A549 (cell line): ENCODE measurements at regions of chr2 and their contacts with region 1.

Region 1: GRCh38 chr2:27281855-27282559 is at the start of gene TRIM54:
- DNase-seq: no peak
- ATAC-seq: peak; percentile 37; a peak in 3 of 6 replicates
- H3K4me3 ChIP-seq: no peak within 1 kb of the TSS
- H3K27ac ChIP-seq: peak within 1 kb of the TSS; percentile 38 to 75
- H3K4me1 ChIP-seq: peaks cover 26% of the 10 kb centered on the region
- CTCF ChIP-seq: no peak
- EP300 ChIP-seq: no peak
- POLR2A ChIP-seq: no peak
- RAD21 ChIP-seq: no peak
- polyA plus RNA-seq, gene TRIM54: 0.05 and 0.14 TPM in 2 replicates

Region 2: DNA sequence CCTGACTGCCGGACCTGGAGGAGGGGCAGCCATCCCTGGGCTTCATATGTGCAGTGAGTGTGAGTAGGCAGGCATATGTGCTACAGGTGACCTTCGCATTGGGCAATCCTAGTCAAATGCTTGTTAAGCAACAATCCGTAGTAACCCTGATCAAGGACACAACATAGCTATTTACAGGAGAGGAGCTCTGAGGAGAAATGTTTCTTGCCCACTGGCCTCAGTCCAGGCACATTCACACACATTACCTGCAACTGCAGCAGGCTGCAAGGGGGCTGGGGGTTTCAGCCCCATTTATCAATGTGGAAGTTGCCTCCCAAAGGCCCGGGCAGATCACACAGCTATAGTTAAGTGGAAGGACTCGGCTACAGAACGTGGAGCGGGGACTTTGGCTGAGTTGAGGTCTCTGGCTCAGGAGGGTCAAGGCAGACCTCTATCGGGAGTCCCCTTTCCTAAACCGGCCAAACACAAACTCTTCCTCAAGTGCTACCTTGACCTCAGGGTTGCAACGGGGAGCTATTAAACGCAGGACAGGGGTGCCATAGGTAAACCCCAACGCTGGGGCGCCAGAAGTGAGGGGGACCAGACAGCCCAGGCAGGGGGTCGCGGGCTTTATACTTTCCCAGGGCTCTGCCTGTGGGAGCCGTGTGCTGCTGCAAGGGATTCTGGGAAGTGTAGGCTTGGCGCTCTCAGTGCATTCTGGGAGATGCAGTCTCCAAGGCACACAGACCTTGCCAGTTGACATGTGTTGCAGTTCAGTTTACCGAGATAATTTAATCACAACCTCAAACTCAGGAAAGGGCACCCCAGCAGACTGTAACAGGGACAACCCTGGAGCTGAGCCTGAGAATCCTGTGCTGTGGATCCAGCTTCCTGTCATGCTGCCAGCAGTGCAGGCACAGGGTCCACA is 186.0 kb before region 1 on chr2:
- CTCF ChIA-PET with region 1: interaction called, 171 read pairs
- POLR2A ChIA-PET with region 1: no interaction called
- DNase-seq: peak; percentile 56 to 80
- ATAC-seq: peak; percentile 67 to 85
- H3K4me3 ChIP-seq: no peak overlapping the region
- H3K27ac ChIP-seq: peak overlapping the region; percentile 46 to 71; a peak in 5 of 6 replicates
- H3K4me1 ChIP-seq: peaks cover 20% of the 10 kb centered on the region
- CTCF ChIP-seq: no peak
- EP300 ChIP-seq: no peak
- POLR2A ChIP-seq: no peak
- RAD21 ChIP-seq: no peak

Region 3: GRCh38 chr2:27170581-27171333 is 111.2 kb before region 1 on chr2:
- CTCF ChIA-PET with region 1: interaction called, 23 read pairs
- POLR2A ChIA-PET with region 1: interaction called, 9 read pairs
- DNase-seq: no peak
- ATAC-seq: no peak
- H3K4me3 ChIP-seq: no peak overlapping the region
- H3K27ac ChIP-seq: no peak overlapping the region
- H3K4me1 ChIP-seq: no peaks in the 10 kb centered on the region
- CTCF ChIP-seq: no peak
- EP300 ChIP-seq: no peak
- POLR2A ChIP-seq: no peak
- RAD21 ChIP-seq: no peak

Region 4: DNA sequence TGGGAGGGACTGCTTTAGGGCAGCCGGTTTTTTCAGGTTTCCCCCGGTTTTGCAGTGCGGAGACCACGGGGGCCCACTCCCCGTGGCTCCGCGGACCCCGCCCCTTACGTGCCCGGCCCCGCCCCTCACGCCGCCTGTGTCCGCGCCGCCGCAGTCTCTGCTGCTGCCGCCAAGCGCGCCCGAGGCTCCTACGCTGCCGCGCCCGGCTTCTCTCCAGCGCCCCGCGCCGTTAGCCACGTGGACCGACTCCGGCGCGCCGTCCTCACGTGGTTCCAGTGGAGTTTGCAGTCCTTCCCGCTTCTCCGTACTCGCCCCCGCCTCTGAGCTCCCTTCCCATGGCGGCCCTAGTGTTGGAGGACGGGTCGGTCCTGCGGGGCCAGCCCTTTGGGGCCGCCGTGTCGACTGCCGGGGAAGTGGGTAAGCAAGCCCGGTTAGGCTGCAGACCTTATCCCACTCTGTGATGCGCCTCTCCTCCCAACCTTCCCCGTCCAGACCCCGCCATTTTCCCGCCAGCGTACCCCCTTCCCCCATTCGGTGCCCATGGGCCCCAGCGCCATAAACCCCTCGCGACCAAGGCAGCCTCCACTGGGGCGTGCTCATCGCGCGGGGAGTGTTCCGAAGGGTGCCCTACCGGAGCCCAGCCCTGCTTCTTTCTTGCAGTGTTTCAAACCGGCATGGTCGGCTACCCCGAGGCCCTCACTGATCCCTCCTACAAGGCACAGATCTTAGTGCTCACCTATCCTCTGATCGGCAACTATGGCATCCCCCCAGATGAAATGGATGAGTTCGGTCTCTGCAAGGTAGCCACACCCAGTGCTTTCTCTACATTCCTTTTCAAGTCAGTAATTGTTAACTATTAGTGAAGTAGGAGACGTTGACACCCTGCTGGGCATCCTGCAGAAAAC is 64.5 kb before region 1 on chr2 and contains the start of gene CAD:
- CTCF ChIA-PET with region 1: interaction called, 12 read pairs
- POLR2A ChIA-PET with region 1: interaction called, 6 read pairs
- DNase-seq: peak; percentile 84 to 92
- ATAC-seq: peak; percentile 88 to 92
- H3K4me3 ChIP-seq: peak within 1 kb of the TSS; percentile 65
- H3K27ac ChIP-seq: peak within 1 kb of the TSS; percentile 94 to 95
- H3K4me1 ChIP-seq: peaks cover 28% of the 10 kb centered on the region
- CTCF ChIP-seq: no peak
- EP300 ChIP-seq: no peak
- POLR2A ChIP-seq: peak; percentile 90
- RAD21 ChIP-seq: no peak
- polyA plus RNA-seq, gene CAD: 50.5 and 61.8 TPM in 2 replicates

Region 5: DNA sequence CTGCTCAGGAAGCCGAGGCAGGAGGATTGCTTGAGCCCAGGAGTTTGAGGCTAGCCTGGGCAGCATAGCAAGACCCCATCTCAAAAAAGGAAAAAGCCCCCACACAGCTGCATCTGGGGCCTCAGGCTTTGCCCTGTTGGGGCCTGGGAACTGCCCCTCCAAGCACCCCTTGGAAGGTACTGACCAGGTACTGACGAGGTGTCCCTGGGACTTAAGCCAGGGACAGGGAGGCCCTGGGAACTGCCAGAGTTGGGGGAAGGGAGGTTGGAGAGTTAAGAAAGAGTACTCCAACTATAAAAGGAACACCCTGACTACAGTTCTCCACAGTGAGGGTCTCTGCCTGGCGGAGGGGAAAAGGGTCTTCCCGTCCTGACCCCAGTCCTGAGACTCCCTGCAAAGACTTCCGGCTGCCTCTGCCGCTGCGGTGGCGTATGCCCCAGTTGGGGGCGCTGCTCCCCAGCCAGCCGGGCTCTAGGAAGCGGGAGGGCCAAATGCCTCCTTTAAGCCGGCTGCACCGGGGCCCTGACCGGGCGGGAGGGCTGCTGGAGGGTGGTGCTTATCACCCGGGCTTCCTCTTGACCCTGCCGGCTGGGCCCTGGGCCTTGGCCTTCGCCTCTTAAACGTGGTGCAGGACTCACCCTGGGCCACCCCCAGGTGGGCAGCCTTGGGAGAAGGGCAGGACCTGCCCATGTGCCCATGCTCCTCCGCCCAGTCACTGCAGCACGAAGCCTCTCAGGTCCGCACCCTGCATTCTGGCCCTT is 31.9 kb before region 1 on chr2:
- CTCF ChIA-PET with region 1: interaction called, 205 read pairs
- POLR2A ChIA-PET with region 1: interaction called, 3 read pairs
- DNase-seq: peak; percentile 65 to 79
- ATAC-seq: peak; percentile 71 to 87
- H3K4me3 ChIP-seq: no peak overlapping the region
- H3K27ac ChIP-seq: peak overlapping the region; percentile 11 to 62; a peak in 3 of 6 replicates
- H3K4me1 ChIP-seq: peaks cover 15% of the 10 kb centered on the region
- CTCF ChIP-seq: peak; percentile 84
- EP300 ChIP-seq: no peak
- POLR2A ChIP-seq: no peak
- RAD21 ChIP-seq: peak; percentile 89 to 91

Region 6: DNA sequence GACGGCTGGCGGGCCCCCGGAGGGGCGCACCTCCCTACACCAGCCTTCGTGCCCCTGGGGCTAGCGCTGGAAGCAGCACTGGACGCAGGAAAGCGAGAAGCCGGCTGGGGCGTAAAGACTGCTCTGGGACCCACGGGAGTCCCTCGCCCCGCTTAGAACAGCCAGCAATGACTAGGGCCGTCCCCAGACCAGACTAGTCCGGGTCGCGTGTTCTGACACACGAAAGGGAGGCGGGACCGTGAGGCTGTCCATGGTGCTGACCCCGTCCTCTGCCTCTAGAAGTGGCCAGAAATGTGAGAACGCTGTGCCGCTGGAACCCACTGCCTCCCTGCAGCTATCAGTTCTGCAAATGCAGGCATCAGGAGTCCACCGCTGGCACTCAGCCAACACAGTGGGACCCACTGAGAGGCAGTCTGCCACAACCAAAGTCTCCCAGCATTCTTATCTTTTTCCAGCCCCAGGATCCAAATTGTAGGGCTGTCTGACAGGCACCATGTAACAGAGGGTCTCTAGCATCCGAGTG is 26.4 kb after region 1 on chr2 and contains the start of gene UCN:
- CTCF ChIA-PET with region 1: interaction called, 394 read pairs
- POLR2A ChIA-PET with region 1: interaction called, 4 read pairs
- DNase-seq: no peak
- ATAC-seq: no peak
- H3K4me3 ChIP-seq: no peak within 1 kb of the TSS
- H3K27ac ChIP-seq: no peak within 1 kb of the TSS
- H3K4me1 ChIP-seq: no peaks in the 10 kb centered on the region
- CTCF ChIP-seq: no peak
- EP300 ChIP-seq: no peak
- POLR2A ChIP-seq: no peak
- RAD21 ChIP-seq: no peak
- polyA plus RNA-seq, gene UCN: 1.0 TPM in 2 replicates